Common myeloid progenitor, CD34-positive (primary cell): ENCODE measurements at regions of chr7 and their contacts with region 1.

Region 1: DNA sequence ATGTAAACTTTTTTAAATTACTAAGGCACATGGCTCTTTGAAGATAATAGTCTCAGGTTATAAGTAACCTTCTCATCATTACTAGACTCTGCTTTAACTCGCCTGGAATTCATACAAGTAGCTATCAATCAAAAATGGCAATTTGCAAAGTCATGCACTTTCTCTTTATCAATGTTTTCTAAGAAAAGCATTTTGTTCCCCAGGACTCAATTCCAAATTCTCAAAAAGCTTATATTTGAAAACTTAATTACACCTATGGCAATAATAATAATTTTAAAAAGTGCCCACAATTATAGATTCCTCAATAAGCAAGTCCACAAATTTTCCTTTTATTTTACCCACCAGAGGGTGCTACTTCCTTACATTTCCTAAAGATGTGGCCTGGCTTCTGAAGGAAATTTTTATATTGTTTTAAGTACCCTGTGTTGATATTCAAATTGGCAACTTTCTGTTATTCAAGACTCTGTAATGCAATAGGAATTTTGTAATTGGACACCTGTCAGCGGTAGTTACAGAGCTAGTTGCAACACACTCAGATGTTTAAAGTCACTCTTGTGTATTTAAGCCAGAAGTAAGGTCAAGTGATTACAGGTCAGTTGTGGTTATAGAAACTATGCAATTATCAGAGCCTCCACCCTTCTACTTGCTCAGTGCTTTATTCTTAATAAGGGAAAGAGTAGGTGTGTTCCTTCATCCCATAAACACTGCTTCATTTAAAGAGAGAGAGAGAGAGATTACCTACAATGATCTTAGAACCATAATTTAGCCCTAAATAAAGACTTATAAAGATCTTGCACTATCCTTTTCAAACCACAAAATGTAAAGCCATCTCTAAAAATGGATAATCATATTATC is 47.1 kb upstream of the HYAL4 start:
- DNase-seq: peak; percentile 25 to 61 (median 60)
- H3K4me3 ChIP-seq: no peak overlapping the region
- H3K27ac ChIP-seq: no peak overlapping the region
- H3K4me1 ChIP-seq: no peaks in the 10 kb centered on the region
- H3K27me3 ChIP-seq: no peaks in the 10 kb centered on the region

Region 2: GRCh38 chr7:123773519-123773918 is 24.4 kb before region 1 on chr7:
- CTCF ChIA-PET with region 1: no interaction called
- POLR2A ChIA-PET with region 1: no interaction called
- DNase-seq: no peak
- H3K4me3 ChIP-seq: no peak overlapping the region
- H3K27ac ChIP-seq: no peak overlapping the region
- H3K4me1 ChIP-seq: no peaks in the 10 kb centered on the region
- H3K27me3 ChIP-seq: peaks cover 0 to 1% (median 0%) of the 10 kb centered on the region in 5 experiments

Region 3: GRCh38 chr7:123865517-123866117 is 67.7 kb after region 1 on chr7:
- CTCF ChIA-PET with region 1: interaction called, 24 read pairs
- POLR2A ChIA-PET with region 1: no interaction called
- DNase-seq: peak; percentile 58 to 81 (median 74)
- H3K4me3 ChIP-seq: no peak overlapping the region
- H3K27ac ChIP-seq: no peak overlapping the region
- H3K4me1 ChIP-seq: no peaks in the 10 kb centered on the region
- H3K27me3 ChIP-seq: no peaks in the 10 kb centered on the region